Posterior cingulate gyrus (tissue), 11 donors: ENCODE measurements at regions of chr19 and their contacts with region 1.

Region 1: DNA sequence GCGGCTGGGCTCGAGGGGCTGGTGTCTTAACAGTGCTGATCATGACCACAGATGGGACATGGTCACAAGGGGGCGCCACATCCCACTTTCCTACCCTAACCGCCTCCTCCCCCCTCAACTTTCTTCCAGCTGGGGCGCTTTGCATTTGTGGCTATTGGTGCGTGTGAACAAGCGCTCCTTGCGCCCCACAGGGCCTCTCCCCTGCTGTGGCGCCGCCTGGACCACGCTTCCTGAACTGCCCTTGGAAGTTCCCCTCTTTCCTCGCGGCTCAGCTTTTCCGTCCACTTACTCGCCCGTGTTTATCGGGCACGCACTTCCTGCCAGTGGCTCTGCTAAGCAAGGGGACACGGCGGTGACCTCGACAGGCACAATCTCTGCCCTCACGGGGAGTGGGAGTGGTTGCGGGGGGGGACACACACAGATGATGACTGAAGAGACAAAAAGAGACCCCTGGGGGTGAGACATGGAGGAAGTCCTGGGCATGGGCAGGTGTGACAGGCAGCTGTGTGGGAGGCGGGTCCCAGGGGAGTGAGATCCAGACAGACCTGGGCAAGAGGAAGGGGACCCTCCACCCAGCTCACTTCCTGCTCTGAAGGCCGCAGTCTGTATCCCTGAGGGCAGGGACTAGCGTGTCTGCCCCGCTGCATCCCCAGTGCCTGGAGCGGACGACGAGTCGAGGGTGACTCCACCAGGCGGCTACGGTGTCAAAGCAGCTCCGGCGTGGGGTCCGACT is 40.3 kb downstream of the ZNF787 start:
- DNase-seq: peak in 9 of 10 donors; percentile 61 to 94 (median 73)

Region 2: GRCh38 chr19:56170261-56170660 is 89.4 kb after region 1 on chr19:
- intact Hi-C with region 1: loop called (anchors 5 kb)
- DNase-seq: peak in 1 of 10 donors; percentile 30

Region 3: GRCh38 chr19:56252699-56253422 is 172.0 kb after region 1 on chr19:
- intact Hi-C with region 1: loop called (anchors 10 kb)
- DNase-seq: peak; percentile 13 to 90 (median 56)